HepG2 (cell line): ENCODE measurements at regions of chr10 and their contacts with region 1.

Region 1: DNA sequence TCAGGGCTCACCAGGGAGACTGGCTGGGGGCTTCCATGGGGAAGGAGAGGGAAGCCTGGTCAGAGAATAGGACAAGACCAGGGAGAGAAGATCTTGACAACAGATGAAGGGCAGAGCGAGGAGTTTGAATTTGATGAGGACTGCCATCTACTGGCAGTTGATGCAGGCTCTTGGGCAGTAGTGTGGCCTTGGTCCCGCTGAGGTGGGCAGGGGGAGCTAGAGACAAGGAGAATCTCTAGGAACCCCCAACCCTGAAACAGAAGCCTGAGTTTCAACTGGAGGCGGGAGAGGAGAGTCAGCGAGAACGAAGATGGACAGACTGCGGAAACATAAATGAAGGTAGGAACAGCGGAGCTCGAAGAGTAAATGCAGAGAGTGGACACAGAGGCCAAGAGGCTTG is 81.0 kb downstream of the PPP1R3C start:
- DNase-seq: peak; percentile 50
- ATAC-seq: peak; percentile 77
- H3K4me3 ChIP-seq: no peak overlapping the region
- H3K27ac ChIP-seq: no peak overlapping the region
- H3K4me1 ChIP-seq: peaks cover 56% of the 10 kb centered on the region
- H3K27me3 ChIP-seq: no peaks in the 10 kb centered on the region
- CTCF ChIP-seq: peak; percentile 87
- EP300 ChIP-seq: no peak
- POLR2A ChIP-seq: no peak
- RAD21 ChIP-seq: peak; percentile 75

Region 2: GRCh38 chr10:91313796-91314485 is 237.9 kb before region 1 on chr10:
- CTCF ChIA-PET with region 1: no interaction called
- POLR2A ChIA-PET with region 1: no interaction called
- in situ Hi-C with region 1: no loop called
- intact Hi-C with region 1: loop called (anchors 10 kb)
- DNase-seq: no peak
- ATAC-seq: no peak
- H3K4me3 ChIP-seq: no peak overlapping the region
- H3K27ac ChIP-seq: no peak overlapping the region
- H3K4me1 ChIP-seq: no peaks in the 10 kb centered on the region
- H3K27me3 ChIP-seq: no peaks in the 10 kb centered on the region; a peak in 1 of 5 replicates
- CTCF ChIP-seq: no peak
- EP300 ChIP-seq: no peak
- POLR2A ChIP-seq: no peak
- RAD21 ChIP-seq: no peak

Region 3: DNA sequence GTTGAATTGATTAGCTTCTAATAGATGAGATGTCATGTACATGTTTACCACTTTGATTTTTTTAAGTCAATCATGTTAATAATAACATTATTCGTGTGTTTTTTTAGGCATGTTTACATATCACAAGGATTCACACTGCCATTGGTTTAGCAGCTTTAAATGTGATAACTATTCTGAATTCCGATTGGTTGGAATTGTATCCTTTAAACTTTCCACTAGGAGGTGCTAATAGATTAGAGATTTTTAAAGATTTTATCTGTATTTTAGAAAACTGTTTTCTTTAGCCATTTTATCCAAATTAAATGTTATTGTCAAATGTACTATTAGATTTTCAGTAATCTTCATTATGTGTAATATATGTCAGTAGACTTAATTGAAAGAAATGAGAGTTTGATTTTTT is 58.5 kb before region 1 on chr10:
- CTCF ChIA-PET with region 1: interaction called, 9 read pairs
- POLR2A ChIA-PET with region 1: no interaction called
- in situ Hi-C with region 1: no loop called
- intact Hi-C with region 1: loop called (anchors 5 kb)
- DNase-seq: peak; percentile 41
- ATAC-seq: peak; percentile 50; the same call in 2 of the 3 replicates
- H3K4me3 ChIP-seq: no peak overlapping the region
- H3K27ac ChIP-seq: no peak overlapping the region
- H3K4me1 ChIP-seq: no peaks in the 10 kb centered on the region
- H3K27me3 ChIP-seq: no peaks in the 10 kb centered on the region
- CTCF ChIP-seq: peak; percentile 50
- EP300 ChIP-seq: no peak
- POLR2A ChIP-seq: no peak
- RAD21 ChIP-seq: no peak

Region 4: DNA sequence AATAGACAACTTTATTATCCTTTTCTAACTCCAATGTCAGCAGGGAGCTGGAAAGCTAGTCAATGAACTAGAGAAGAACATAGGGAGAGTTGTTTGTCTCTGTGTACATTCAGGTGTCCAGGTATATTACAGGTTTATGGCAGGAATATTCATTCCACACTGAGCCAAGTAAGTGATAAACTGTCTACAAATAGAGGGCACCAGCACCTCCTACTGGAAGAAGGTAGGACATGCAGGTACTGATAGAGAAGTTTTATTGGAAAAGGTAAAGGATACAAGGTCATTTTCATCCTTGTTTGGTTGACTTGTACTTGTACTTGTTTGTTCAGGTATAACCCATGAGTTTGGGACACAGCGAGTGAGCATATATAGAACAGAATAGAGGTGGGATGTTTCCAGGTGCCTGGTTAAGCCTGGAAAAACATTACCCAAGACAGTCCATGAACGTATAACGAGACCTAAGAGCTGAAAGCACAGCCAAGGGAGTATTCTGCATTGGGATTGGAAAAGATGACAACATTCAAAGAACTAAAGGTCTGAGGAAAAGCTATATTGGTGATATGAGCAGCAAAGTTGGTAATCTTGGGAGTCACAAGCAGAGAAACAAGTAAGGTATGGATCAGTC is 142.4 kb after region 1 on chr10:
- CTCF ChIA-PET with region 1: no interaction called
- POLR2A ChIA-PET with region 1: no interaction called
- in situ Hi-C with region 1: no loop called
- intact Hi-C with region 1: loop called (anchors 10 kb)
- DNase-seq: peak; percentile 38
- ATAC-seq: peak; percentile 50; the same call in 2 of the 3 replicates
- H3K4me3 ChIP-seq: no peak overlapping the region
- H3K27ac ChIP-seq: no peak overlapping the region
- H3K4me1 ChIP-seq: no peaks in the 10 kb centered on the region
- H3K27me3 ChIP-seq: no peaks in the 10 kb centered on the region
- CTCF ChIP-seq: peak; percentile 76
- EP300 ChIP-seq: no peak
- POLR2A ChIP-seq: no peak
- RAD21 ChIP-seq: no peak